Mammary epithelial cell (primary cell): ENCODE measurements at regions of chr6 and their contacts with region 1.

Region 1: DNA sequence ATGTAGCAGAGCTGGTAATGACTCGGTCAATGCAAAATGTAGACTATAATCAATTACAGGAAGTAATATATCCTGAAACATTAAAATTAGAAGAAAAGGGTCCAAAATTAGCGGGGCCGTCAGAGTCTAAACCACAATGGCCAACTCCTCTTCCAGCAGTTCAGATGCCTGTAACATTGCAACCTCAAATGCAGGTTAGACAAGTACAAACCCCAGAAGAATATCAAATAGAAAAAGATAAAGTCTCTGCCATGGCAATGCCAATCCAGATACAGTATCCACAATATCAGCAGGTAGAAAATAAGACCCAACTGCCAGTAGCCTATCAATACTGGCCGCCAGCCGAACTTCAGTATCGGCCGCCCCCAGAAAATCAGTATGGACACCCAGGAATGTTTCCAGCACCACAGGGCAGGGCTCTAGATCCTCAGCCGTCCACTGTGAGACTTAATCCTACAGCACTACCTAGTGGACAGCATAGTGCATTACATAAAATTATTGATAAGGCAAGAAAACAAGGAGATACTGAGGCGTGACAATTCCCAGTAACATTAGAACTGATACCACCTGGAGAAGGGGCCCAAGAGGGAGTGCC is 158.4 kb downstream of the GPX5 start:
- DNase-seq: peak; percentile 46
- H3K4me3 ChIP-seq: peak overlapping the region in 1 of 3 experiments; percentile 9
- H3K27ac ChIP-seq: no peak overlapping the region
- H3K4me1 ChIP-seq: peaks cover 8% of the 10 kb centered on the region
- H3K27me3 ChIP-seq: no peaks in the 10 kb centered on the region
- CTCF ChIP-seq: peak; percentile 66 to 73

Region 2: DNA sequence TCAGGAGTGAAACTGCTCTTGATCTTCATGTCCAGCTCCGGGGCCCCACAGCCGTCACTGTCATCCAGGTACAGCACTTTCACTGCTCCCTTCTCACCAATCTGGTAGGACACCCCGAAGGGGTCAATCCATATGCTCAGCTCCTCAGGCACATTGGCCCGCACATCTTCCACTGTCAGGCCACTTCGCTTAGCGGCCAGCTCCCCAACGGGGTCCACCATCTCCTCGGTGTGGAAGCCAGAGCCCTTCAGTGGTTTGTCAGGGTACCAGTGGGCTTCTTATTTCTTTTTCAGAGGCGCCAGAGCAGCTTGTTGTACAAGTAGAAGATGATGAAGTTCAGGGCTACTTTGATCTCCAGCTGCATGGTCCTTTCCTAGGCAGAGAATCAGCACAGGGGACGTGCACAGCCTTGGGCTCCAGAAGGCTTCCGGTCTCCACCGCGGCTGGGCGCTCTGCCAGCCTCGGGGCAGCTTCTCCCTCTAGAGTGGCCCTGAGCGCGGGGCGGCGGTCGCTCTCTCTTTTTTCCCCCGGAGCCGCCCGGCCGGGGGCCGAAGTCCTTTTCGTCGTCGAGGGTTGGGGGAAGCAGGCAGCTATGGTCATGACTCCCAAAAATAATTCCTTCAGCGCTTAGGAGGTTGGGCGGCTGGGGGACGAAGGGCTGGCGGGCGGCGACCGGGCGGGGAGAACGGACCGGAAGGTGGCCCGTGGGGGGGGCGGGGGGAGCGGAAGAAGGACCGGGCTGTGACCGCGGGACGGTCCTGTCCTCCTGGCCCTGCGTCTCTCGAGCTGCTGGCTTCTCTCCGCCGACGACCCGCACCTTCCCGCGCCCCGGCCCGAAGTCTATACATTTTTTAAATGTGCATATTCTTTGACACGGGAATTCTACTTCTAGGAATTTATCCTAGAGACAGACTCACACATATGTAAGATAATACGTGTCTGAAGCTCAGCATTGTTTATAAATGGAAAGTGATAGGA is 465.5 kb before region 1 on chr6:
- CTCF ChIA-PET with region 1: no interaction called
- dilution Hi-C with region 1: no loop called
- in situ Hi-C with region 1: no loop called
- intact Hi-C with region 1: loop called (anchors 10 kb)
- DNase-seq: peak; percentile 20
- H3K4me3 ChIP-seq: peak overlapping the region; percentile 54 to 73 (median 55)
- H3K27ac ChIP-seq: no peak overlapping the region
- H3K4me1 ChIP-seq: peaks cover 5% of the 10 kb centered on the region
- H3K27me3 ChIP-seq: no peaks in the 10 kb centered on the region
- CTCF ChIP-seq: no peak

Region 3: GRCh38 chr6:28489366-28490204 is 194.5 kb before region 1 on chr6:
- CTCF ChIA-PET with region 1: no interaction called
- dilution Hi-C with region 1: no loop called
- in situ Hi-C with region 1: loop called in 1 of 2 experiments (anchors 25 kb)
- intact Hi-C with region 1: no loop called
- DNase-seq: no peak
- H3K4me3 ChIP-seq: peak overlapping the region; percentile 49 to 70 (median 55)
- H3K27ac ChIP-seq: peak overlapping the region; percentile 51
- H3K4me1 ChIP-seq: no peaks in the 10 kb centered on the region
- H3K27me3 ChIP-seq: no peaks in the 10 kb centered on the region
- CTCF ChIP-seq: no peak

Region 4: DNA sequence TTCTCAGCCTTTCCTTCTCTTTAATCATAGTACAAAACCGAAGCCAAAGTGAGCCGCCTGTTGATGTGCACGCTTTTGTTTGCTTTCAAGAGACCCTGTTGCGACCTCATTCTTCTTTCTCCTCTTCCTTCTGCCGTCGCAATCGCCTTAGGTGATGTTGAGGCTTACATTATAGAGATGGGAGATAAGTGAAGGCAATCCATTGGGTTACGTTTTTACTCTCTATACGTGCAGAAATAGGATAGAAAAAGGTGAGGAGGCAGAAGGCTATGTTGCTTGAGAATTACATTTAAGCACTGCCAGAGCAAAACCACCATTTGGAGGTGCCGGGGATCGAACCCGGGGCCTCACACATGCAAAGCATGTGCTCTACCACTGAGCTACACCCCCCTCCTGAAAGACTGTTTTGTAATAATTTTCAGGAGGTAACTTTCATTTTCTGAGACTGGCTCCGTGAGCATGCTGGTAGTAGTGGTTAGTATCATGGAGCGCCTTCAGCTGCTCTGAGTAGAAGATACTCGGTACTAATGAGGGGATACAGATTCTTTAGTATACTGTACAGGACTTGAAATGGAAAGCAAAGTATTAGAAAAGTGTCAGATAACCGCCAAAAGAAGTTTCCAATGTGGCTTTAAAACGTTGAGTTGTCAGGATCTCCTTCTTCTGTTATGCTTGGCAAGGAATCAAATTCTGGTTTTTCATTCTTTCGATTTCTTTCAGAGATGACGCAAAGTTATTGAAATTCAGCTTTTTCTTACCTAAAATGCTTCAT is 74.2 kb after region 1 on chr6:
- CTCF ChIA-PET with region 1: no interaction called
- dilution Hi-C with region 1: no loop called
- in situ Hi-C with region 1: no loop called
- intact Hi-C with region 1: loop called (anchors 5 kb)
- DNase-seq: peak; percentile 84
- H3K4me3 ChIP-seq: peak overlapping the region; percentile 45 to 50 (median 49)
- H3K27ac ChIP-seq: peak overlapping the region; percentile 18
- H3K4me1 ChIP-seq: no peaks in the 10 kb centered on the region
- H3K27me3 ChIP-seq: no peaks in the 10 kb centered on the region
- CTCF ChIP-seq: no peak

Region 5: GRCh38 chr6:28838634-28839442 is 154.8 kb after region 1 on chr6:
- CTCF ChIA-PET with region 1: no interaction called
- dilution Hi-C with region 1: no loop called
- in situ Hi-C with region 1: no loop called
- intact Hi-C with region 1: loop called (anchors 1 kb)
- DNase-seq: peak; percentile 80
- H3K4me3 ChIP-seq: peak overlapping the region; percentile 73 to 100 (median 78)
- H3K27ac ChIP-seq: no peak overlapping the region
- H3K4me1 ChIP-seq: no peaks in the 10 kb centered on the region
- H3K27me3 ChIP-seq: no peaks in the 10 kb centered on the region
- CTCF ChIP-seq: peak; percentile 37 to 81